Naive thymus-derived CD4-positive, alpha-beta T cell (primary cell): ENCODE measurements at regions of chr1 and their contacts with region 1.

Region 1: GRCh38 chr1:15409388-15410222 is at the start of gene EFHD2:
- DNase-seq: peak; percentile 71 to 97 (median 82)
- ATAC-seq: peak; percentile 82
- H3K4me3 ChIP-seq: peak within 1 kb of the TSS; percentile 77
- H3K4me3 Mint-ChIP-seq: peak within 1 kb of the TSS; percentile 87 to 99 (median 92)
- H3K27ac ChIP-seq: peak within 1 kb of the TSS; percentile 94
- H3K27ac Mint-ChIP-seq: peak within 1 kb of the TSS; percentile 66 to 97 (median 95)
- H3K4me1 ChIP-seq: peaks cover 20 to 69% of the 10 kb centered on the region in 2 donors
- H3K4me1 Mint-ChIP-seq: peaks cover 6 to 52% (median 33%) of the 10 kb centered on the region in 7 donors
- H3K27me3 ChIP-seq: no peaks in the 10 kb centered on the region
- H3K27me3 Mint-ChIP-seq: peaks cover 0 to 33% (median 0%) of the 10 kb centered on the region in 5 donors
- total RNA-seq, gene EFHD2: 29.9 to 258 (median 82.6) TPM

Region 2: DNA sequence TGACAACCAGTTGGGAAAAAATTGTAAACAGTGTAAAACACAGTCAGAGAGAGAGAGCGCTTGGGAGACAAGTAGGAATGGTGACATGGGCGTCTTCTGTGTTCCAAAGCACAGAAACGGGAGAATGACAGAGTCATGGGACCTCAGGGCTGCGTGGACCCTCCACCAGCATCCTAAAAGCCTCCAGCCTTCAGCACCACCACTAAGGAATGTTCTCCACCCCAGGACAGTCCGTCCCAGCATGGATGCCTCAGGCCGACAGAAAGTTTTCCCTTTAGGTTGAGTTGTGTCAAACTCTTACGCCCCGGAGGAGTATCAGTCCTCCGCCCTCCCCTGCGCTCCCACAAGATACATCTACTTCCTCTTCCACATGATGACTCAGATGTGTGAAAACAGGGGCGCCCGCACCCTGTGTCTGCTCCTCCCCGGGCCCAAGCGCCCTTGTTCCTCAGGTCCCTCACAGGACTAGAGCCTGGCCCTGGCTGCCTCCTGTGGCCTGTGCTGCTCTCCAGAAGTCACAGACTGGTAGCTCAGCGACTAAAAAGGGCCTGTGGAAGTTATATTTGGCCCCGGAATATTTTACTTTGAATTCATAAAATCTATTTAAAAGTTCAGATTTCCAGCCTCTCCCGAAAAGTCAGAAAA is 63.8 kb before region 1 on chr1:
- CTCF ChIA-PET with region 1: no interaction called
- POLR2A ChIA-PET with region 1: no interaction called
- intact Hi-C with region 1: loop called in 1 of 2 experiments (anchors 1 kb)
- DNase-seq: peak in 2 of 9 donors; percentile 31 to 68
- ATAC-seq: peak; percentile 95
- H3K4me3 ChIP-seq: peak overlapping the region; percentile 25
- H3K4me3 Mint-ChIP-seq: peak overlapping the region in 1 of 10 donors; percentile 71
- H3K27ac ChIP-seq: no peak overlapping the region
- H3K27ac Mint-ChIP-seq: peak overlapping the region in 3 of 9 donors; percentile 41 to 84 (median 60)
- H3K4me1 ChIP-seq: peaks cover 0 to 60% of the 10 kb centered on the region in 2 donors
- H3K4me1 Mint-ChIP-seq: peaks cover 0 to 76% (median 8%) of the 10 kb centered on the region in 7 donors
- H3K27me3 ChIP-seq: no peaks in the 10 kb centered on the region
- H3K27me3 Mint-ChIP-seq: peaks cover 9 to 52% (median 35%) of the 10 kb centered on the region in 5 donors